ENCODE measurements at regions of chr10 and their contacts with region 1.

Region 1: GRCh38 chr10:48782386-48782785 is 97.7 kb downstream of the WDFY4 start:
- DNase-seq: no peak

Region 2: DNA sequence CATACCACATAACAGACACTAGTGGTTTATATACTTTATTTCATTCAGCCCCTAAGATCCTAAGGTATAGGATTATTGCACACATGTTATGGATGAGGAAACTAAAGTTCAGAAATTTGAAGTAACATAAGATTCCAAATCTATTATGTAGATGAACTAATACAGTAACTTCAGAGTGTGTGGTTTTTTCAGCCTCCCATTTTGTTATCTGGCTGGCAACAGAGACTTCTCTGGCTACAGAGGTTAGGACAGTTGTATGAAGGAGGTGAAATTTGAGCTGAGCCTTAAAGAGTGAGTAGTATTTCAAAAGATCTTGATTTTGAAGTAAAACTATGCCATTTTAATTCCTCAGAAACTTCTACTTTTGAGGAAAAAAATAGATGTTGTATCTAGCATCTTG is 350.5 kb before region 1 on chr10:
- intact Hi-C with region 1: loop called in 1 of 2 experiments (anchors 5 kb)
- DNase-seq: no peak

Region 3: DNA sequence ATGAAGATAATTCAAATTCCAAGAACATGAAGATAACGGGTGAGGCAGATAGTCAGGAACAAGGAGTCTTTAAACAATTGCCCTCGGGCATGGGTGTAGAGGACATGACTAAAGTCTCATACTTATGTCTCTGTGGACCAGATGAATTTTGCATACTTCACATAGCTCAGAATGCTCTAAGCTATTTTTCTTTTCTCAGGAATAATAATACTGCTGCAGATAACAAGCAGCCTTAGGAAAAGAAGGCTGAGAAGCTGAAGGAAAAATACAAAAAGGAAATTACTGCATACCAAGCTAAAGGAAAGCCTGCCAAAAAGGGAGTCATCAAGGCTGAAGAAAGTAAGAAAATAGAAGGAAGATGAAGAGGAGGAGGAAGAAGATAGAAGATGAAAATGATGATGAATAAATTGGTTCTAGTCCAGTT is 769.9 kb after region 1 on chr10:
- intact Hi-C with region 1: no loop called
- DNase-seq: no peak

Measured in posterior vena cava (tissue), 2 donors.